Endothelial cell of umbilical vein (primary cell): ENCODE measurements at regions of chr11 and their contacts with region 1.

Region 1: GRCh38 chr11:86608251-86608799 is 64.1 kb downstream of the ME3 start:
- DNase-seq: peak; percentile 91
- H3K4me3 ChIP-seq: peak overlapping the region in 1 of 3 experiments; percentile 10
- H3K27ac ChIP-seq: peak overlapping the region; percentile 87
- H3K4me1 ChIP-seq: peaks cover 37% of the 10 kb centered on the region
- H3K27me3 ChIP-seq: no peaks in the 10 kb centered on the region
- CTCF ChIP-seq: peak; percentile 77 to 85
- POLR2A ChIP-seq: no peak

Region 2: DNA sequence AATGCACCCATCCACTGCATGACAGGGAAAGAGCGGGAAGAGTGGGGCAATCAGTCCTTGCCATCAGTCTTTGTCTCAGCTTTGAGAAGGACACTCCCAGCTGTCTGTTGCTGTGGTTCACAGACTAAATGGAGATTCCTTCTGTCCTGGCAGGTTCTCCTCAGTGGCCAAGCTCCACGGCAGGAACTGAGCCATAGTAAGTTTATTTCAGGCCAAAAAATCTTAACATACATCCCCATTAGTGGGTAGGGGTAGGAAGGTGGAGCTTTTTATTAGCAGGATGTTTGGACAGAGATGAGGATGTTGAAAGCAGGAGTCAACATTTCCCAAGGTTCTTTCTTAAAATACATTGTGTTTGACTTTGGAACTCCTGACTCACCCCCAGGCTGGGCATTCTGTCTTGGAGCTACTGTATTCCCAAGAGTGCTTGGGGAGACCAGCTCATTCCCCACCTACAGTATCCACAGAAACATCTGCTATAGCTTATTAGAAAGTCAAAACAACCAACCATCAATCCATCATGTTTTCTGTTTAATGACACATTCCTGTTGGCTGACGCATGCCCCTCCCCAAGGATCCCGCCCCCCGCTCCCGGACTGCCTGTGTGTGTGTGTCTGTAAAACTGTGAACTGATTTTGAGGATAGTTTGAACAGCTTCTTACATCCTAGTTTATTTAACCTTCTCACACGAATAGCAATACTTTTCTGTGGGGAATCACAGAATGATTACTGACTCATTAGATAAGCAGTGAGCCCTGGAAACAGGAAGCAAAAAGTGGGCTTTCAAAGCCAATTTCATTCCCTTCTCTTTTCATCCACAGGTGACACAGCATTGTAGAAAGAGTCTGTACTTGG is 124.2 kb before region 1 on chr11:
- CTCF ChIA-PET with region 1: interaction called, 30 read pairs
- POLR2A ChIA-PET with region 1: no interaction called
- dilution Hi-C with region 1: no loop called
- intact Hi-C with region 1: loop called (anchors 1 kb)
- DNase-seq: peak; percentile 100
- H3K4me3 ChIP-seq: no peak overlapping the region
- H3K27ac ChIP-seq: peak overlapping the region; percentile 94
- H3K4me1 ChIP-seq: peaks cover 47% of the 10 kb centered on the region
- H3K27me3 ChIP-seq: no peaks in the 10 kb centered on the region
- CTCF ChIP-seq: no peak
- POLR2A ChIP-seq: peak; percentile 39

Region 3: GRCh38 chr11:86537541-86538222 is 70.6 kb before region 1 on chr11:
- CTCF ChIA-PET with region 1: interaction called, 18 read pairs
- POLR2A ChIA-PET with region 1: no interaction called
- dilution Hi-C with region 1: no loop called
- intact Hi-C with region 1: loop called (anchors 1 kb)
- DNase-seq: peak; percentile 64
- H3K4me3 ChIP-seq: no peak overlapping the region
- H3K27ac ChIP-seq: no peak overlapping the region
- H3K4me1 ChIP-seq: no peaks in the 10 kb centered on the region
- H3K27me3 ChIP-seq: no peaks in the 10 kb centered on the region
- CTCF ChIP-seq: peak; percentile 23 to 42
- POLR2A ChIP-seq: no peak

Region 4: GRCh38 chr11:86577663-86578636 is 30.4 kb before region 1 on chr11:
- CTCF ChIA-PET with region 1: interaction called, 15 read pairs
- POLR2A ChIA-PET with region 1: no interaction called
- dilution Hi-C with region 1: no loop called
- intact Hi-C with region 1: loop called (anchors 2 kb)
- DNase-seq: peak; percentile 98
- H3K4me3 ChIP-seq: no peak overlapping the region
- H3K27ac ChIP-seq: peak overlapping the region; percentile 63
- H3K4me1 ChIP-seq: peaks cover 59% of the 10 kb centered on the region
- H3K27me3 ChIP-seq: no peaks in the 10 kb centered on the region
- CTCF ChIP-seq: no peak
- POLR2A ChIP-seq: no peak

Region 5: GRCh38 chr11:86632499-86633269 is 24.4 kb after region 1 on chr11:
- CTCF ChIA-PET with region 1: interaction called, 15 read pairs
- POLR2A ChIA-PET with region 1: no interaction called
- dilution Hi-C with region 1: no loop called
- intact Hi-C with region 1: loop called (anchors 1 kb)
- DNase-seq: peak; percentile 96
- H3K4me3 ChIP-seq: no peak overlapping the region
- H3K27ac ChIP-seq: peak overlapping the region; percentile 83
- H3K4me1 ChIP-seq: peaks cover 19% of the 10 kb centered on the region
- H3K27me3 ChIP-seq: no peaks in the 10 kb centered on the region
- CTCF ChIP-seq: peak in 1 of 2 donors; percentile 55
- POLR2A ChIP-seq: no peak

Region 6: GRCh38 chr11:86795890-86796289 is 187.6 kb after region 1 on chr11:
- CTCF ChIA-PET with region 1: interaction called, 40 read pairs
- POLR2A ChIA-PET with region 1: interaction called, 3 read pairs
- dilution Hi-C with region 1: no loop called
- intact Hi-C with region 1: no loop called
- DNase-seq: peak; percentile 85
- H3K4me3 ChIP-seq: no peak overlapping the region
- H3K27ac ChIP-seq: peak overlapping the region; percentile 44
- H3K4me1 ChIP-seq: peaks cover 12% of the 10 kb centered on the region
- H3K27me3 ChIP-seq: no peaks in the 10 kb centered on the region
- CTCF ChIP-seq: no peak
- POLR2A ChIP-seq: no peak

Region 7: GRCh38 chr11:86896441-86896841 is 288.1 kb after region 1 on chr11:
- CTCF ChIA-PET with region 1: no interaction called
- POLR2A ChIA-PET with region 1: no interaction called
- dilution Hi-C with region 1: no loop called
- intact Hi-C with region 1: no loop called
- DNase-seq: peak; percentile 71
- H3K4me3 ChIP-seq: no peak overlapping the region
- H3K27ac ChIP-seq: no peak overlapping the region
- H3K4me1 ChIP-seq: peaks cover 7% of the 10 kb centered on the region
- H3K27me3 ChIP-seq: no peaks in the 10 kb centered on the region
- CTCF ChIP-seq: no peak
- POLR2A ChIP-seq: no peak

Region 8: DNA sequence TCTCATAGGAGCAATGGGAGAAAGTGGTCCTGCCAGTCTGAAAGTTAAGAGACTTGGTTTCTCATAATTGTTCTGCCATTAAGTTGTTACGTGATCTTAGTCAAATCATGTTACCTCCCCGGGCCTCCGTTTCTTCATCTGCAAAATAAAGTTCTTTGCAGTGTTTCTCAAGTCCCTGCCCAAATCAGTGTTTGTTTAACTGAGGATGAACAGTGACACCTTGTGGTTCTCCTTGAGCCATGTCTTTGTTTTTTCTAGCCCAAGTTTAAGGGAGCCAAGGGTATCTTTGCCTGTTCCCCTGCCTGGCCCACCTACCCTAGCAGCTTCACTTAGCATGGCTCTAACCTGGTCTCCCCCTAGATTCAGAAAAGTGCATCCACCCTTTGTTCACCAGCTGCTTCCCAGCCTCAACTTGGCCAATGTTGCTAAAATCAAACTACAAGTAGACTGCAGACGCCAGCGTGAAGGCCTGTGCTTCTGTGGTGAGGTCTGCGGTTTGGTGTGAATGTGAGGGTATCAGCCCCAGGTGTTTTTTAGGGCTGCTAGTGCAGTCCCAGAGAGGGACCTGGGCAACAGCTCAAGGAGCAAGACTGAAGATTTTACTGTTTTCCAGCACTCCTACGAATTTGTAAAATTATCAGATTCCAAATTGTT is 311.4 kb after region 1 on chr11:
- CTCF ChIA-PET with region 1: interaction called, 5 read pairs
- POLR2A ChIA-PET with region 1: no interaction called
- dilution Hi-C with region 1: no loop called
- intact Hi-C with region 1: loop called (anchors 1 kb)
- DNase-seq: peak; percentile 88
- H3K4me3 ChIP-seq: no peak overlapping the region
- H3K27ac ChIP-seq: peak overlapping the region; percentile 100
- H3K4me1 ChIP-seq: peaks cover 48% of the 10 kb centered on the region
- H3K27me3 ChIP-seq: no peaks in the 10 kb centered on the region
- CTCF ChIP-seq: peak; percentile 60
- POLR2A ChIP-seq: no peak

Region 9: GRCh38 chr11:87173185-87174039 is 565.1 kb after region 1 on chr11:
- CTCF ChIA-PET with region 1: no interaction called
- POLR2A ChIA-PET with region 1: no interaction called
- dilution Hi-C with region 1: no loop called
- intact Hi-C with region 1: no loop called
- DNase-seq: peak; percentile 94
- H3K4me3 ChIP-seq: no peak overlapping the region
- H3K27ac ChIP-seq: peak overlapping the region; percentile 70
- H3K4me1 ChIP-seq: peaks cover 25% of the 10 kb centered on the region
- H3K27me3 ChIP-seq: no peaks in the 10 kb centered on the region
- CTCF ChIP-seq: no peak
- POLR2A ChIP-seq: no peak